ENCODE measurements at regions of chr12 and their contacts with region 1.

Region 1: GRCh38 chr12:46983393-46984266 is 95.8 kb upstream of the PCED1B start:
- DNase-seq: peak; percentile 3
- H3K4me3 Mint-ChIP-seq: no peak overlapping the region
- H3K27ac Mint-ChIP-seq: no peak overlapping the region
- H3K4me1 Mint-ChIP-seq: no peaks in the 10 kb centered on the region
- H3K27me3 Mint-ChIP-seq: peaks cover 8% of the 10 kb centered on the region

Region 2: DNA sequence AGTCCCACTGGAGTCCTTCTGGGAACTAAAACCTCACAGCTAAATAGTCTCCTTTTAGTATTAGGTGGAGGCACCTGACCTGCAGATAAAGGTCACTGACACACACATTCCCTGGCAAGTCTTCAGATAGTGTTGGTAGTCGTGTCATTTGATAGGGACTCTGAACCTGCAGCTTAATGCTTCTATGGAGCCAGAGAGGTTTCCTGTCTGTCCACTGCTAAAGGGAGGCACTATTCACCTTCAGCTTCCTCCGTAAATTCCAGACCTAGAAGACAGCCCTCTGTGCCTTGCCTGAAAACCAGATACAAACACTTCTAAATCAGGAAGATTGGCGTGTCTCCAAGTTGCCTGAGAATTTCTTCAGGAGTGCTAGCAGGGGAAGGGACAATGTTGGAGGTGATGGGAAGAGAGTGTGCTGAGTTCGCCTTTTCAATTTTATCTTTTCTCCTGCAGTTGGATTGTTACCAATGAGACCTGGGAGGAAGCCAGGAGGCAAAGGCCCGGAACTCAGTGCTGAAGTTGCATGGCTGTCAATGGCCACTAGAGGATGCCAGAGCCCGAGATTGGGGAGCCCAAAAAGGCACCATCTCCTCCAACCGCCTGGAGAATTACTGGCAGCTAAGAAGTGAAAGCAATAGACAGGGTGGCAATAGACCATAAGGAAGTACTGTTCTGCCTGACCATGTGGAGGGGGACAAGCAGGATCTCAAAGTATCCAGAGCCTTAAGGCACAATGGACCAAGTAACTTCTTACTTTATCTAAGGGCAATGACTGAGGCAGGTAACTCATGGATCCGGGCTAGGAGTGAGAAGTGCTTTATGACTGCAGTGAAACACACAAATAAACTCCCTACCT is 911.6 kb before region 1 on chr12:
- intact Hi-C with region 1: loop called (anchors 1 kb)
- DNase-seq: peak; percentile 42
- H3K4me3 Mint-ChIP-seq: no peak overlapping the region
- H3K27ac Mint-ChIP-seq: no peak overlapping the region
- H3K4me1 Mint-ChIP-seq: peaks cover 11% of the 10 kb centered on the region
- H3K27me3 Mint-ChIP-seq: no peaks in the 10 kb centered on the region

Region 3: DNA sequence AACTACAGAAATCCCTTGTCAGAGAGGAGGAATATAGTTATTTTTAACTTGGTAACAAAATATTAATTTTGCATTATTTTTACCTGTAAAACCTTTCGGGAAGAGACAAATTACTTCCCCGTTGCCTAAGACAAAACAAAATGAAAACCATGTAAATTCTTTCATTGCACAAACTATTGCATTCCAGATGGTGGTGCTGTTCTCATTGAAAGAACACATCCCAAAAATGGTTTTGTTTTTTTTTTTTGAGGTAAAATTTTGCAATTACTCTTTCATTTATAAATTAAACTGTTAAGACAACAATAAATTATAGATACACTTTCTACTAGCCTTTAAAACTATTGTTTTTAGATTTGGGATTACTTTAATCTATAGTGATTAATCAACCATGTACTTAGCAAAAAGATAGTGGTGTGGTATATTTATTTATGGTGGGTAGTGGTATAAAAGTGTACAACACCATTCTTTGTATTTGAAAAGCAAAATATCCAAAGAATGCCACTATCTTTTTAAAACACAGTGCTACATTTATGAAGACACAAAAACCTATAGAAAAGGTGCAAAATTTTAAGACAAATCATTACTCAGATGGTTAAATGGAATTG is 830.3 kb before region 1 on chr12:
- intact Hi-C with region 1: loop called (anchors 10 kb)
- DNase-seq: no peak
- H3K4me3 Mint-ChIP-seq: no peak overlapping the region
- H3K27ac Mint-ChIP-seq: no peak overlapping the region
- H3K4me1 Mint-ChIP-seq: no peaks in the 10 kb centered on the region
- H3K27me3 Mint-ChIP-seq: peaks cover 6% of the 10 kb centered on the region

Region 4: DNA sequence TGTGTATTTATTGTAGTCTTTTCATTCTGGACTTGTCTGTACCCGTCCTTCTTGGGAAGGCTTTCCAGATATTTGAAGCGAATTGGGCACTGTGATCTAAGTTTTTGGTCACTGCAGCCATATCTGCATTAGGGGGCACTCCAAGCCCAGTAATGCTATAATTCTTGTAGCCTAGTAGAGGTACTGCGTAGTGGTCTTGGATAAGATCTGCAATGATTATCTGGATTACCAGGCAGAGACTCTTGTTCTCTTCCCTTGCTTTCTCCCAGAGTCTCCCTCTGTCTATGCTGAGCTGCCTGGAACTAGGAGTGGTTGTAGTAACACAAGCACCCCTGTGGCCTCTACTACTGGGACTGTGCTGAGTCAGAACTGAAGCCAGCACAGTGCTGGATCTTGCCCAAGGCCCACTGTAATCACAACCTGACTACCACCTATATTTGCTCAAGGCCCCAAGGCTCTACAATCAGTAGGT is 641.0 kb before region 1 on chr12:
- intact Hi-C with region 1: loop called (anchors 1 kb)
- DNase-seq: no peak
- H3K4me3 Mint-ChIP-seq: no peak overlapping the region
- H3K27ac Mint-ChIP-seq: no peak overlapping the region
- H3K4me1 Mint-ChIP-seq: no peaks in the 10 kb centered on the region
- H3K27me3 Mint-ChIP-seq: peaks cover 9% of the 10 kb centered on the region

Region 5: DNA sequence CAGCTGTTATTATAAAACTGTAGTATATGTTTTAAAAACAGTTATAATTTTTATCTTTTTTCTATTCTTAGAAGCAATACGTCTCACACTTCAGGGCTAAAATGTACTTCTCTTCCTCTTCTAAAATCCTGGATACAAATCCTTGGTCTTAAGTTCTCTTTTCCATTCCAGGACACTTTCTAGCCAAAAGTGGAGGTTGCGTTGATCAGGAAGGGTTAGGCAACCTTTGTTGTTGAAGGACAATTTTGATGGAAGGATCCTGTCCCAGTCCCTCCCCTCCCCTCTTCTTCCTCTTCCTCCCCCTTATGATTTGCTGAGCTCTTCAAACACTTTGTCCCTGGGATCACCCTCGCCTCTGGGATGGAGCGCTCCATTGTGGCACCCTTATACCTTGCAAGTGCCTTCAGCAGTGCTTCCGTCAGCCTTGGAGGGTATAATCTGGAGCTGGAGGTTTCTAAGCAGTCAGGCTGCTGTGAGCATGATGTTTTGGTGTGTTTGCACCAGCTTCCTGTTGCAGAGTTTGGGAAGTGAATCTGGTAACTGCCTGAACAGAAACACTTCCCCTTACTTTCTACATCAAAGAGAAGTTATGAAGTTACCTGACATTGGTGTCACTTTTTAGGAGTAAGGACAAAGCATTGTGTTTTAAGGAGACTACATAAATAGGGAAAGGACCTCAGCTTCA is 523.6 kb before region 1 on chr12:
- intact Hi-C with region 1: no loop called
- DNase-seq: no peak
- H3K4me3 Mint-ChIP-seq: peak overlapping the region; percentile 88
- H3K27ac Mint-ChIP-seq: peak overlapping the region; percentile 99
- H3K4me1 Mint-ChIP-seq: peaks cover 61% of the 10 kb centered on the region
- H3K27me3 Mint-ChIP-seq: no peaks in the 10 kb centered on the region

Region 6: DNA sequence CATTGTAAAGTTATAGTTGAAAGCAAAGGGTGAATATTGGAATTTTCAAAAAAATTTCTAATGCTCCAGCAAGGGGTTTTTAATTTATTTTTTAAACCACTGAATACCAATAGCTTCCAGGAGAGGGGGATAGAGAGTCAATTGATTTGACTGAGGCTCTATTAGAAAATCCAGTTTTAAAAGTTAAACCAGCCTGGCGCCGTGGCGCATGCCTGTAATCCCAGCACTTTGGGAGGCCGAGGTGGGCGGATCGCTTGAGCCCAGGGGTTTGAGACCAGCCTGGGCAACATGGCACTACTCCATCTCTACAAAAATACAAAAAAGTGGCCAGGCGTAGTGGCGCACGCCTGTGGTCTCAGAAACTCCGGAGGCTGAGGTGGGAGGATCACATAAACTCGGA is 307.9 kb before region 1 on chr12:
- intact Hi-C with region 1: loop called (anchors 1 kb)
- DNase-seq: no peak
- H3K4me3 Mint-ChIP-seq: no peak overlapping the region
- H3K27ac Mint-ChIP-seq: no peak overlapping the region
- H3K4me1 Mint-ChIP-seq: peaks cover 7% of the 10 kb centered on the region
- H3K27me3 Mint-ChIP-seq: peaks cover 3% of the 10 kb centered on the region